Cardiac septum (tissue), 1 donor: ENCODE measurements at regions of chr17 and their contacts with region 1.

Region 1: GRCh38 chr17:31433091-31433790 is 41.8 kb downstream of the RAB11FIP4 start:
- DNase-seq: no peak

Region 2: DNA sequence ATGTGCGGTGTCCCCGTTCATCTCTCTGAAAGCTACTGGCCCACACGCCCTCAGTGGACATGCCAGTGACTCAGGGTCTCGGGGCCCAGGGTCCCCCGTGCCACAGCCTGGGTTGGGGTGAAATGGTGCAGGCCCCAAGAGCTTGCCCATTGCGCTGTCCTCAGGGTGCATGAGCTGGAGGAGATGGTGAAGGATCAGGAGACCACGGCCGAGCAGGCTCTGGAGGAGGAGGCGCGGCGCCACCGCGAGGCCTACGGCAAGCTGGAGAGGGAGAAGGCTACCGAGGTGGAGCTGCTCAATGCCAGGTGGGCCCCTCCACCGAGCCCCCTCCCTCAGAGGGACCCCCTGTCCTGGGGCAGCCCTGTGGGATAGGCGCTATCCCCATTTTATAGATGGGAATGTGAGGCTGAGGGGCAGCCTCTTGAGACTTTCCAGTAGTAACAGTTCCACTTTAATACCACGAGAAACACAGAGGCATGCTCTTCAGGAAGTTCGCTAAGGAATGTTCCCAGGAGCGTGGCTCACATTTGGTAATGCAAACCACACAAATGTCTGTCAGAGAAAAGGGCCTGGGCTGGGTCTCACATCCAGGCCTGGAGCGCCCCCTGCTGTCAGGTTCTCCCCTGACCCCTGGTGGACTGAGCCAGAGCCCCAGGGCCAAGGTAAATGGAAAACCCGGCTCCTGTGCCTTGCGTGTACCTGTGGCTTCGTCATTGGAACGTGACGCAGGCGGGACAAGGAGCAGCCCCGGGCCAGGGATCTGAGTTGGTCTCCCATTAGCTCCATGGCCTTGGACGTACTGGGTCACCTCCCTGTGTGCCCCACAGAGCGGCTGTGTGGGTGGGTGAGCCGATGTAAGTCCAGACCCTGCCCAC is 91.9 kb after region 1 on chr17:
- intact Hi-C with region 1: loop called (anchors 1 kb)
- DNase-seq: peak; percentile 91

Region 3: GRCh38 chr17:31907342-31907962 is 474.2 kb after region 1 on chr17:
- intact Hi-C with region 1: loop called (anchors 10 kb)
- DNase-seq: no peak